ENCODE measurements at regions of chr10 and their contacts with region 1.

Region 1: GRCh38 chr10:126549344-126549743 is 121.1 kb downstream of the C10orf90 start:
- DNase-seq: no peak
- H3K27ac ChIP-seq: no peak overlapping the region
- CTCF ChIP-seq: no peak

Region 2: DNA sequence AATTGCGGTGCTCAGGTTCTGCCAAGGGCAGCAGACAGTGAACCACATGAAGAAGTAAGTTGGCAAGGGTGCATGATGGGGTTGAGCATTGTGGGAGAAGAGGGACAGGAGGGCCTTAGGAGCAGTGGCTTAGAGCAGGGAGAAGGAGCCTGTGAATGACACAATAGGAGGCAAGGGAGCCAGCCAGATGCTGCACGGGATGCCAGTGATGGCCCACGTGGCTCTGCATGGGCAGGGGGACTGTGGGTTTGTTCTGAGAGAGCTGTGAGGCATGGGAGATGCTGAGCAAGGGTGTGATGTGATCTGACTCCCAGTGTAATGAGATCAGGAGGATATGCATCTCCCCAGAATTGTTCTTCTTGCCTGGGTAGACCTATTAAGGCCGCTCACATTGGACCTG is 60.2 kb after region 1 on chr10:
- CTCF ChIA-PET with region 1: no interaction called
- POLR2A ChIA-PET with region 1: no interaction called
- DNase-seq: no peak
- H3K27ac ChIP-seq: no peak overlapping the region
- CTCF ChIP-seq: no peak

Region 3: GRCh38 chr10:126634915-126635314 is 85.6 kb after region 1 on chr10:
- CTCF ChIA-PET with region 1: no interaction called
- POLR2A ChIA-PET with region 1: no interaction called
- DNase-seq: peak; percentile 44
- H3K27ac ChIP-seq: no peak overlapping the region
- CTCF ChIP-seq: no peak

Region 4: GRCh38 chr10:126716366-126716765 is 167.0 kb after region 1 on chr10:
- CTCF ChIA-PET with region 1: interaction called, 13 read pairs
- POLR2A ChIA-PET with region 1: no interaction called
- DNase-seq: no peak
- H3K27ac ChIP-seq: no peak overlapping the region
- CTCF ChIP-seq: no peak

Measured in RWPE1 (cell line).